Activated naive CD4-positive, alpha-beta T cell treated with anti-CD3 and anti-CD28 coated beads for 36 hours (primary cell): ENCODE measurements at regions of chr10 and their contacts with region 1.

Region 1: DNA sequence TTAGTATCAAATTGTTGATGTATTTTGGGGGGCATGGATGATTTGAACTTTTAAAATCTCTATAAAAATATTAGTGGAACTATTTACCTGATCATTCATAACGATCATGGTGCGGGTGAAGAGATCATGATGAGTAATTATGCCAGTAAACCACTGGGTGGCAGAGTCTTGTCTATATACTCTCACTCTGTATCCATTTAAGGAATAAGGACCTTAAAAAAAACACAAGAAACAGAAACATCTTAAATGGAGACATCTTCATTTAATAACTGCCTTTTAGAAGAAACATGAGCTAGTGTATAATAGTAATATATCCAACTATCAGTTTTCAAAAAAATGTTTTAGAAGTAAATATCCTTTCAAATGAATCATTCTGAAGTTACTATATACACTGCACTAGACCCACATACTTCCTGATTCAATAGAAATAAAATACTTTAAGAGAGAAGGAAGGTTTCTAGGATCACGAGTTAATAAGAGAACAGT is 84.0 kb downstream of the NRBF2 start:
- DNase-seq: no peak
- H3K4me3 Mint-ChIP-seq: no peak overlapping the region
- H3K27ac Mint-ChIP-seq: peak overlapping the region; percentile 13
- H3K4me1 Mint-ChIP-seq: peaks cover 49% of the 10 kb centered on the region
- H3K27me3 Mint-ChIP-seq: no peaks in the 10 kb centered on the region

Region 2: DNA sequence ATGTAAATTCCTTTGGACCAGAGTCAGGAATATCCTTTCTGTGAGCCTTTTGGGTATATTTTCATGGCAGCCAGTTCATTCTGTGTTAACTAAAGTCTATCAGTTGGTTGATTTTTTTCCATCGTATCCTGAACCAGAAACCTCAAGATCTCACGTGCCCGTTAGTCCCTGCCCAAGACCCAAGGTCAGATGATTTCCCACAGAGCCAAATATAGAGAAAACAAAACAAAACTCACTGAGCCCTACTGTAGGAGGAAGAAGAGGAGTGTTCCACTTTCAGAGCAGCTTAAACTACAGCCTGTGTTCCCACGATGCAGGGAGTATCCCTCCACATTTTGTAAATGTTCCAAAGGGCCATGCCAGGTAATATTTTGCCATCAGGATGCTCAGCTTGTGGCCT is 508.6 kb before region 1 on chr10:
- CTCF ChIA-PET with region 1: no interaction called
- intact Hi-C with region 1: no loop called
- DNase-seq: no peak
- H3K4me3 Mint-ChIP-seq: no peak overlapping the region
- H3K27ac Mint-ChIP-seq: no peak overlapping the region
- H3K4me1 Mint-ChIP-seq: peaks cover 3% of the 10 kb centered on the region
- H3K27me3 Mint-ChIP-seq: peaks cover 2% of the 10 kb centered on the region

Region 3: GRCh38 chr10:62779487-62780248 is 437.5 kb before region 1 on chr10:
- CTCF ChIA-PET with region 1: no interaction called
- intact Hi-C with region 1: no loop called
- DNase-seq: peak; percentile 94
- H3K4me3 Mint-ChIP-seq: no peak overlapping the region
- H3K27ac Mint-ChIP-seq: peak overlapping the region; percentile 59
- H3K4me1 Mint-ChIP-seq: peaks cover 21% of the 10 kb centered on the region
- H3K27me3 Mint-ChIP-seq: no peaks in the 10 kb centered on the region

Region 4: GRCh38 chr10:63227207-63227915 is 10.2 kb after region 1 on chr10:
- CTCF ChIA-PET with region 1: interaction called, 10 read pairs
- intact Hi-C with region 1: no loop called
- DNase-seq: no peak
- H3K4me3 Mint-ChIP-seq: no peak overlapping the region
- H3K27ac Mint-ChIP-seq: peak overlapping the region; percentile 97
- H3K4me1 Mint-ChIP-seq: peaks cover 56% of the 10 kb centered on the region
- H3K27me3 Mint-ChIP-seq: no peaks in the 10 kb centered on the region

Region 5: GRCh38 chr10:63355682-63356081 is 138.5 kb after region 1 on chr10:
- CTCF ChIA-PET with region 1: no interaction called
- intact Hi-C with region 1: loop called (anchors 2 kb)
- DNase-seq: no peak
- H3K4me3 Mint-ChIP-seq: no peak overlapping the region
- H3K27ac Mint-ChIP-seq: no peak overlapping the region
- H3K4me1 Mint-ChIP-seq: peaks cover 28% of the 10 kb centered on the region
- H3K27me3 Mint-ChIP-seq: no peaks in the 10 kb centered on the region

Region 6: GRCh38 chr10:63465293-63466143 is 248.4 kb after region 1 on chr10 and contains the start of gene JMJD1C:
- CTCF ChIA-PET with region 1: interaction called, 3 read pairs
- intact Hi-C with region 1: loop called (anchors 1 kb)
- DNase-seq: peak; percentile 69
- H3K4me3 Mint-ChIP-seq: peak within 1 kb of the TSS; percentile 92
- H3K27ac Mint-ChIP-seq: peak within 1 kb of the TSS; percentile 79
- H3K4me1 Mint-ChIP-seq: peaks cover 24% of the 10 kb centered on the region
- H3K27me3 Mint-ChIP-seq: no peaks in the 10 kb centered on the region
- total RNA-seq, gene JMJD1C: 54.1 to 56.6 TPM

Region 7: GRCh38 chr10:63720072-63720537 is 502.9 kb after region 1 on chr10:
- CTCF ChIA-PET with region 1: interaction called, 27 read pairs
- intact Hi-C with region 1: loop called (anchors 1 kb)
- DNase-seq: peak; percentile 67
- H3K4me3 Mint-ChIP-seq: no peak overlapping the region
- H3K27ac Mint-ChIP-seq: no peak overlapping the region
- H3K4me1 Mint-ChIP-seq: peaks cover 10% of the 10 kb centered on the region
- H3K27me3 Mint-ChIP-seq: peaks cover 4% of the 10 kb centered on the region